ENCODE measurements at regions of chrX and their contacts with region 1.

Region 1: DNA sequence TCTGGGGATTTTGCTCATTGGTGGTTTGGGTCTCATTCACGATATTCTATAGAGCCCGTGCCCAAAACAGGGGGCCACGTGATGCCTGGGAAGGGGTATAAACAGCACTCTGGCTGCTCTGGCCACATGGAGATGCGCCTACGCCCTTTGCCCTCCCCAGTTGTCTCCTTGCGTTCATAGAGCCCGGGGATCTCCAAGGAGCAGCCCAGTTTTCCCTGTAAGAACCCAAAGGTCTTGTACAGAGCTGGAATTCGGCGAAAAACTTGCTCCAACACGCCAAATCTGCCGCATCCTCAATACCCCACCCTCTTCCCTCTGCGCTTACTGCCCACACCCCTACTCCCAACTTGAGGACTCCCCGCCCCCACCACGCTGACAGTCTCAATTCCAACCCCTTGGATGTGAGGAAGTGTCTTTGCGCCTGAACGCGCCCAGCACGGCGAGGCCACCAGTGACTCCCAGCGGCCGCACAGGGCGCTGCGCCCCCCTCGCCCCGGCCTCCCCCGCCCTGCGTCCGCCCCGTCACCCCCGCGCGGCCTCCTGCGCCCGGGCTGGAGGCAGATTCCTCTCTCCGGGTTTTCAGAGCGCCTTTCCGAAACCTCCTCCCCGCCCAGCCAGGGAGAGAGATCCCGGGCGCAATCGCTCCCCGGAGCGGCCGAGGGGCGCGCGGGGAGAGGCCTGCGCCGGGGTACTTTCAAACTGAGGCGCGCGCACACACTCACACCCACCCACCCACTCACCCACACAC is at the start of gene NHS:
- DNase-seq: peak; percentile 80
- H3K4me3 ChIP-seq: peak within 1 kb of the TSS; percentile 64 to 77 (median 74)
- H3K27ac ChIP-seq: peak within 1 kb of the TSS; percentile 91
- H3K4me1 ChIP-seq: peaks cover 15% of the 10 kb centered on the region
- H3K27me3 ChIP-seq: no peaks in the 10 kb centered on the region
- CTCF ChIP-seq: peak in 1 of 2 donors; percentile 56
- total RNA-seq, gene NHS: 9.0 to 13.9 TPM

Region 2: GRCh38 chrX:17120816-17121215 is 254.0 kb before region 1 on chrX:
- CTCF ChIA-PET with region 1: no interaction called
- dilution Hi-C with region 1: no loop called
- in situ Hi-C with region 1: no loop called
- intact Hi-C with region 1: loop called (anchors 1 kb)
- DNase-seq: no peak
- H3K4me3 ChIP-seq: no peak overlapping the region
- H3K27ac ChIP-seq: no peak overlapping the region
- H3K4me1 ChIP-seq: no peaks in the 10 kb centered on the region
- H3K27me3 ChIP-seq: no peaks in the 10 kb centered on the region
- CTCF ChIP-seq: no peak

Region 3: DNA sequence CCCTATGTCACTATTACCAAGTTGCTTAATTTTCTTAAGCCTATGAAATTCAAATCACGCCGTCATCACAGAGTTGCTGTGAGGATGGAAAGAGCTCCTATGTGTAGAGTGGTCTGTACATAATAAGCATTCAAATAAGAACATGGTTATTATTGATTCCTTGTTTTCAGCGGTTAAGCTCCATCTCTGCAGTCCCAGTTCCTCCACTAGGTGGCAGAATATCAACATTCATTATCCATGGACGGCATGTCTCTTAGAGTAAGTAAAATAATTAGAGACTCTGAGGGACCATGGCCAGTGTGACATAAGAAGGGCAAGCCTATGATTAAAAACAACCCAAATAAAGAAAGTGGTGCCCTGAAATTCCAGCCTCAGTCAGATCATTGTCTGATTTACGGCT is 132.3 kb before region 1 on chrX:
- CTCF ChIA-PET with region 1: interaction called, 5 read pairs
- dilution Hi-C with region 1: no loop called
- in situ Hi-C with region 1: no loop called
- intact Hi-C with region 1: loop called (anchors 1 kb)
- DNase-seq: peak; percentile 43
- H3K4me3 ChIP-seq: no peak overlapping the region
- H3K27ac ChIP-seq: no peak overlapping the region
- H3K4me1 ChIP-seq: no peaks in the 10 kb centered on the region
- H3K27me3 ChIP-seq: peaks cover 9% of the 10 kb centered on the region
- CTCF ChIP-seq: peak; percentile 81 to 90

Region 4: GRCh38 chrX:17413228-17413627 is 38.4 kb after region 1 on chrX:
- CTCF ChIA-PET with region 1: no interaction called
- dilution Hi-C with region 1: no loop called
- in situ Hi-C with region 1: no loop called
- intact Hi-C with region 1: loop called (anchors 1 kb)
- DNase-seq: peak; percentile 91
- H3K4me3 ChIP-seq: no peak overlapping the region
- H3K27ac ChIP-seq: peak overlapping the region; percentile 95
- H3K4me1 ChIP-seq: peaks cover 46% of the 10 kb centered on the region
- H3K27me3 ChIP-seq: no peaks in the 10 kb centered on the region
- CTCF ChIP-seq: no peak

Region 5: GRCh38 chrX:17521871-17522693 is 147.3 kb after region 1 on chrX:
- CTCF ChIA-PET with region 1: no interaction called
- dilution Hi-C with region 1: no loop called
- in situ Hi-C with region 1: no loop called
- intact Hi-C with region 1: loop called (anchors 1 kb)
- DNase-seq: peak; percentile 57
- H3K4me3 ChIP-seq: no peak overlapping the region
- H3K27ac ChIP-seq: no peak overlapping the region
- H3K4me1 ChIP-seq: peaks cover 5% of the 10 kb centered on the region
- H3K27me3 ChIP-seq: no peaks in the 10 kb centered on the region
- CTCF ChIP-seq: no peak

Region 6: DNA sequence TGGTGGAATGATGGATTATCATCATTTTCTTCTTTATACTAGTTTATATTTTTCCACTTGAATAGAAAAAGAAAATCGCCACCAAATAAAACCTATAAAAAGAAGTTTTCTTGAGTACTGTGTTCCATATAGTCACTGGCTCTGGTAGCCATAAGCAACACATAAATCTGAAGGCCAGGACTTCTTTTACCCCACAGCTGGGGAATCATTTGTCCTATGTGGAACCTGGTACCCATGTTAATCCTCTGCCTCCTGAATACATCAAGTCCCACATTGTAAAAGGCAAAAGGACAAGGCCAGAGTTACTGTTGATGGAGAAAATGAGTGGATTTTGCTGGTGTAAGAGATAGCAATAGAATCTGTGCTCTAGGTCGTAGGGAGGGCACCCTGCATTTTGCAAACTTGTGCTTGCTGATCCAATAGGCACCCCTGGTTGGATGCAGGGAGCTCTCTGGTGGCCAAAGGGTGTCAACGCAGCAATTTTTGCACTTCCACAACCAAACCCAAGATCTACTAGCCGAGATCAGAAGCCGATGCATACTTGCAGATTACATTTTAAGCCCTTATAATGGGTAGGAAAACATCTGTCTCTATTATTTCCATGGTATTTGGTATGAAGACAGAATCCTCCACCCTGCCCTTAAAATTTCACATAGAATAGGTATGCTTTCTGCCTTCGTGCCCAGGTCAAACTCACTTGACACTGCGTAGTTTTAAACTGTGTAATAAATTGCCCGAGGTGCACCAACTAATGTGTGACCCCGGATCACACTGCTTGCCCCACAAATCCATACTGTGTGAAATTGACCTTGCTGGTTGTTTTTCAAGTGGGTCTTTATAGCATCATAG is 216.3 kb after region 1 on chrX:
- CTCF ChIA-PET with region 1: interaction called, 3 read pairs
- dilution Hi-C with region 1: no loop called
- in situ Hi-C with region 1: no loop called
- intact Hi-C with region 1: loop called (anchors 1 kb)
- DNase-seq: peak; percentile 64
- H3K4me3 ChIP-seq: peak overlapping the region in 2 of 3 experiments; percentile 19 to 28
- H3K27ac ChIP-seq: peak overlapping the region; percentile 18
- H3K4me1 ChIP-seq: peaks cover 33% of the 10 kb centered on the region
- H3K27me3 ChIP-seq: no peaks in the 10 kb centered on the region
- CTCF ChIP-seq: peak; percentile 88 to 94

Region 7: DNA sequence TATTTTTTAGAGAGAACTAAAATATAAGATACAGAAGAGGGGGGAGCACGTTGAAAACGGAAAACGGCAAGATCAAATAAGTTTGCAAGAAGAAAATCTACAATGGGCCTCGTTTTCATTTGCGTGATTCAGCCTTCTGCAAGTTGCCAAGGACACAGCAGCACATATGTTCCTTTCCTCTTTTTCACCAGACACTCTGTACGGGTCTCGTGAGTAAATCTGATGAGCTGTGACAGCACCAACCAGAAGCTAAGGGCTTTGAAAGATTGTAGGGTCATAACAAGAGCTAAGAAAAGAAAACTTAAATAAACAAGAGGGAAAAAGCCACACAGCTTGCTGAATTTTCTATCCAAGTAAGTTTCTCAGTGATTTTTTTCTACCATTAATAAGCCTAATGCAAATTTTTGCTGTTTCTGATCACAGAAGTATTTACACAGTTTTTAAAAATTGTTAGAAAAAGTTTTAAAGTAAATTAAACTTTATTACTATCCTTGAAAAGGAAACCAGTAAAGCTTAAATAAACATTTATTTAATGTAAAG is 916.3 kb after region 1 on chrX:
- CTCF ChIA-PET with region 1: no interaction called
- dilution Hi-C with region 1: no loop called
- in situ Hi-C with region 1: no loop called
- intact Hi-C with region 1: no loop called
- DNase-seq: no peak
- H3K4me3 ChIP-seq: no peak overlapping the region
- H3K27ac ChIP-seq: no peak overlapping the region
- H3K4me1 ChIP-seq: no peaks in the 10 kb centered on the region
- H3K27me3 ChIP-seq: no peaks in the 10 kb centered on the region
- CTCF ChIP-seq: no peak